CD4-positive, alpha-beta T cell (primary cell): ENCODE measurements at regions of chr15 and their contacts with region 1.

Region 1: GRCh38 chr15:68154923-68155559 is 50.1 kb downstream of the CALML4 start:
- DNase-seq: peak in 7 of 14 experiments; percentile 3 to 51 (median 28)
- ATAC-seq: peak; percentile 37
- H3K4me3 ChIP-seq: no peak overlapping the region
- H3K4me3 Mint-ChIP-seq: no peak overlapping the region
- H3K27ac ChIP-seq: no peak overlapping the region
- H3K27ac Mint-ChIP-seq: no peak overlapping the region
- H3K4me1 ChIP-seq: no peaks in the 10 kb centered on the region
- H3K4me1 Mint-ChIP-seq: peaks cover 4% of the 10 kb centered on the region
- H3K27me3 ChIP-seq: no peaks in the 10 kb centered on the region
- H3K27me3 Mint-ChIP-seq: no peaks in the 10 kb centered on the region
- CTCF ChIP-seq: peak; percentile 45

Region 2: GRCh38 chr15:68229386-68230156 is 74.5 kb after region 1 on chr15 and contains the start of gene CLN6:
- CTCF ChIA-PET with region 1: no interaction called
- POLR2A ChIA-PET with region 1: no interaction called
- intact Hi-C with region 1: loop called in 1 of 2 experiments (anchors 2 kb)
- DNase-seq: peak; percentile 57 to 93 (median 75)
- ATAC-seq: peak; percentile 82
- H3K4me3 ChIP-seq: peak within 1 kb of the TSS; percentile 88
- H3K4me3 Mint-ChIP-seq: peak within 1 kb of the TSS; percentile 92
- H3K27ac ChIP-seq: peak within 1 kb of the TSS in 1 of 2 donors; percentile 34
- H3K27ac Mint-ChIP-seq: peak within 1 kb of the TSS; percentile 73
- H3K4me1 ChIP-seq: peaks cover 29% of the 10 kb centered on the region
- H3K4me1 Mint-ChIP-seq: peaks cover 28% of the 10 kb centered on the region
- H3K27me3 ChIP-seq: no peaks in the 10 kb centered on the region
- H3K27me3 Mint-ChIP-seq: no peaks in the 10 kb centered on the region
- CTCF ChIP-seq: no peak
- total RNA-seq, gene CLN6: 8.0 to 8.1 TPM